H1 (cell line): ENCODE measurements at regions of chr19 and their contacts with region 1.

Region 1: DNA sequence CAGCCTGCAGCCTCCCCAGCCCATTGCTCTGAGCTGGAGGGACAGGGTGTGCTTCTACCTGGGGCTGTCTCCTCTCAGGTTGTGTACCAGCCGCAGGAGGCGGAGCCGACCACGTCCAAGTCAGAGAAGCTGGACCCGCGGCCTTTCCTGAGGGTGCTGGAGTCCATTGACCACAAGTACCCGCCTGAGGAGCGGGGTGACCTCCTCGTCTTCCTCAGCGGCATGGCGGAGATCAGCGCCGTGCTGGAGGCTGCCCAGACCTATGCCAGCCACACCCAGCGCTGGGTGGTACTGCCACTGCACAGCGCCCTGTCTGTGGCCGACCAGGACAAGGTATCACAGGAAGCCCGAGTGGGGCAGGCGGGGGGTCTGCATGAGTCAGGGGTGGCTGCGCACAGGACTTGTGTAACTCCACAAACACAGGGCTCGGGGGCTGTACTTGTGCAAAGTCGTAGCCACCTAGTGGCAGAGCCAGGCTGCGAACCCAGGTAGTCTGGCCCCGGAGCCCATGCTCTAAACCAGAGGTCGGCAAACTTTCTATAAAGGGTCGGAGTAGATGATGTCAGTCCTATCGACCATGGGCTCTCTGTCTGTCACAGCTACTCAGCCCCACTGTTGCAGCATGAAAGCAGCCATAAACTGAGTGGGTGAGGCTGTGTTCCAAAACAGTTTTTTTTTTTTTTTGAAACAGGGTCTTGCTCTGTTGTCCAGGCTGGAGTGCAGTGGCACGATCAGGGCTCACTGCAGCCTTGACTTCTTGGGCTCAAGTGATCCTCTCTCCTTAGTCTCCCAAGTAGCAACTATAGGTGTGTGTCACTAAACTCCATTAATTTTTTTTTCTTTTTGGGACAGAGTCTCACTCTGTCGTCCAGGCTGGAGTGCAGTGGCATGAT is 8.9 kb downstream of the DHX34 start:
- DNase-seq: peak in 1 of 2 experiments; percentile 73
- H3K4me3 ChIP-seq: no peak overlapping the region
- H3K27ac ChIP-seq: no peak overlapping the region
- H3K4me1 ChIP-seq: no peaks in the 10 kb centered on the region
- H3K27me3 ChIP-seq: no peaks in the 10 kb centered on the region
- CTCF ChIP-seq: peak; percentile 43 to 61 (median 57); a peak in 3 of 4 replicates
- EP300 ChIP-seq: no peak
- POLR2A ChIP-seq: no peak
- RAD21 ChIP-seq: peak; percentile 29 to 46; a peak in 2 of 4 replicates

Region 2: GRCh38 chr19:47370045-47370611 is 12.1 kb after region 1 on chr19:
- CTCF ChIA-PET with region 1: interaction called, 11 read pairs
- POLR2A ChIA-PET with region 1: interaction called, 12 read pairs
- DNase-seq: no peak
- H3K4me3 ChIP-seq: no peak overlapping the region
- H3K27ac ChIP-seq: no peak overlapping the region
- H3K4me1 ChIP-seq: no peaks in the 10 kb centered on the region
- H3K27me3 ChIP-seq: no peaks in the 10 kb centered on the region
- CTCF ChIP-seq: no peak
- EP300 ChIP-seq: no peak
- POLR2A ChIP-seq: no peak
- RAD21 ChIP-seq: no peak